Activated CD8-positive, alpha-beta memory T cell treated with anti-CD3 and anti-CD28 coated beads, Interleukin-2, amount 10 ng/mL, durations not matched to agents 7 days and 5 days (primary cell): ENCODE measurements at regions of chr7 and their contacts with region 1.

Region 1: GRCh38 chr7:142811154-142811737 is 40.5 kb downstream of the PRSS2 start:
- DNase-seq: no peak
- ATAC-seq: no peak
- H3K4me3 Mint-ChIP-seq: peak overlapping the region; percentile 25
- H3K27ac Mint-ChIP-seq: peak overlapping the region; percentile 84
- H3K4me1 Mint-ChIP-seq: peaks cover 68% of the 10 kb centered on the region
- H3K27me3 Mint-ChIP-seq: no peaks in the 10 kb centered on the region

Region 2: DNA sequence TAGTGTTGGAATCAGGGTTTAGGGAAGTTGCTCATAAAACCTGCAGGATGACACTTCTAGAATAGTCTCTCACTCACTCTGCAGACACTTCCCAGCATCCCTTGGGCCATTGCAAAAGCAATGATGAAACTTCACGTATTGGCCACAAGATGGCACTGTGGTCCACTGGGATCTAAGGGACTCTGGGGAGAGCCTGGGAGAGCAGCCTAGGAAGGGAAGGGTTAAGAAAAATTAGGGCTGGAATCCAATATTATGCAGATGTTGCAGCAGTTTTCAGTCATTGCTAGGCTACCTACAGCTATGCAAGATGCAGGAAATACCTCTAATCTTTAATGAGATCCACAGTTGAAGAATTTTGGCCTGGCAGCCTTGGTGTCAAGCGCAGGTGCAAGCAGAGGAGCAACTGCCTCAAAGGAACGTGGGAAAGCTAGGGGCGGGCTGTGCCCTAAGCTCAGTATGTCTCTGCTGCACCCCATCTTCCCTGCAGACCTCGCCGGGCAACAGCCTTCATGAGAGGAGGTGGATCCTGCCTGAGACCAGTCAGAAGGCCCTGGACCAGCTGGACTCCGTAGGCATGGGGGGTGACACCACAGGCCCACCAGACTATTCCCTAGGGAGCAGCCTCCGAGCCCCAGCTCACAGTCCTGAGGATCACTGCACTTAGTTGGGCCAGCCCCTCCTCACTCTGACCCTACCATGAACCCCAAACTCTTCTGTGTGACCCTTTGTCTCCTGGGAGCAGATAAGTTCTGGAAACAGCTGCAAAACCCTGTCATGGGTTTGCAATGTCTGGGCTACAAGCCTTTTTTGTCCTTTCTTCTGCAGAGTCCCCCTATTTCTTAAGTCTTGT is 425.5 kb before region 1 on chr7:
- CTCF ChIA-PET with region 1: interaction called, 31 read pairs
- DNase-seq: peak; percentile 72
- ATAC-seq: peak; percentile 62
- H3K4me3 Mint-ChIP-seq: peak overlapping the region; percentile 12
- H3K27ac Mint-ChIP-seq: peak overlapping the region; percentile 8
- H3K4me1 Mint-ChIP-seq: peaks cover 32% of the 10 kb centered on the region
- H3K27me3 Mint-ChIP-seq: no peaks in the 10 kb centered on the region

Region 3: GRCh38 chr7:142632291-142633134 is 178.7 kb before region 1 on chr7:
- CTCF ChIA-PET with region 1: interaction called, 24 read pairs
- DNase-seq: peak; percentile 62
- ATAC-seq: peak; percentile 86
- H3K4me3 Mint-ChIP-seq: no peak overlapping the region
- H3K27ac Mint-ChIP-seq: no peak overlapping the region
- H3K4me1 Mint-ChIP-seq: peaks cover 11% of the 10 kb centered on the region
- H3K27me3 Mint-ChIP-seq: no peaks in the 10 kb centered on the region

Region 4: GRCh38 chr7:142703655-142704305 is 107.5 kb before region 1 on chr7:
- CTCF ChIA-PET with region 1: no interaction called
- DNase-seq: no peak
- ATAC-seq: no peak
- H3K4me3 Mint-ChIP-seq: no peak overlapping the region
- H3K27ac Mint-ChIP-seq: no peak overlapping the region
- H3K4me1 Mint-ChIP-seq: peaks cover 19% of the 10 kb centered on the region
- H3K27me3 Mint-ChIP-seq: peaks cover 1% of the 10 kb centered on the region

Region 5: GRCh38 chr7:142772051-142772450 is 39.2 kb before region 1 on chr7:
- CTCF ChIA-PET with region 1: no interaction called
- DNase-seq: no peak
- ATAC-seq: no peak
- H3K4me3 Mint-ChIP-seq: no peak overlapping the region
- H3K27ac Mint-ChIP-seq: no peak overlapping the region
- H3K4me1 Mint-ChIP-seq: peaks cover 12% of the 10 kb centered on the region
- H3K27me3 Mint-ChIP-seq: no peaks in the 10 kb centered on the region

Region 6: DNA sequence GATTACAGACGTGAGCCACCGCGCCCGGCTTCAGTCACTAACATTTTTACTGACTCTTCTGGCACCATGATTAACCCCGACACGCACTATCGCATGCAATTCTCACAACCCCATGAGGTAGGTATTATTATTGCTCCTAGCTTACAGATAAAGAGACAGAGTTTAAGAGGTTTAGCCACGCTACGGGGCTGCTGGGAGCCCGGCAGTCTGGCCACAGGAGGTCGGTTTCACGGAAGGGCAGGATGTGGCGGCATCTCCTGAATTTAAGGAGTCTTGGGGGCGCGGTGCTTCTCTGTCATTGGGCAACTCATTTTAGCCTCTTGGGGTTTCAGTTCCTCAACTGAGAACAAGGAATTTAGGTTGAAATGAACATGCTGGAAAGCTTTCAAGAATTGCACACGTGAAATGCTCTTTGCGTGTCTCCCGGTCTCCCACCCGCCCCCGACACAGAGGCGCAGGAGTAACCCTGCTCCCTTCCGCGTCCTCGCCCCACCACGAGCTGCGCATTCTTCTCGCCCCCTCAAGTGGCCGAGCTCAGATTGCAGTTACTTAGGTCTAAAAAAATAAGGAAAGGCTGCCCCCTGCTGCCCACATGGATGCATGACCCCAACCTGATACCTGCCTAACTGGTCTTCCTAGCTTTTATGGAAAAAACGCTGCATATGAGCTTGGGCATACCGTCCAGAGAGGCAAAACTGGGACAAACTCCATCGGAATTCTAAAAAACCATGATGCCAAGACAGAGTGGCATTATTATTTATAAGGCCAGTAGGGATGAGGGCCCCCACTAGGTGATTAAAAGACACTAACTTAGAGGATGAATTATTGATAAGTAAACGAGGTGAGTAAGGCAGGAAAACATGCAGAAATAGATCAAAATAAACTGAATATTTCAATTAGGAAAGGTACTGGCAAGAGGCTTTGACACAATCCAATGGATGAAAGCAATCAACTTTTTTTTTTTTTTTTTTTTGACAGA is 28.0 kb before region 1 on chr7:
- CTCF ChIA-PET with region 1: interaction called, 103 read pairs
- DNase-seq: peak; percentile 86
- ATAC-seq: peak; percentile 59
- H3K4me3 Mint-ChIP-seq: peak overlapping the region; percentile 67
- H3K27ac Mint-ChIP-seq: peak overlapping the region; percentile 85
- H3K4me1 Mint-ChIP-seq: peaks cover 30% of the 10 kb centered on the region
- H3K27me3 Mint-ChIP-seq: no peaks in the 10 kb centered on the region

Region 7: DNA sequence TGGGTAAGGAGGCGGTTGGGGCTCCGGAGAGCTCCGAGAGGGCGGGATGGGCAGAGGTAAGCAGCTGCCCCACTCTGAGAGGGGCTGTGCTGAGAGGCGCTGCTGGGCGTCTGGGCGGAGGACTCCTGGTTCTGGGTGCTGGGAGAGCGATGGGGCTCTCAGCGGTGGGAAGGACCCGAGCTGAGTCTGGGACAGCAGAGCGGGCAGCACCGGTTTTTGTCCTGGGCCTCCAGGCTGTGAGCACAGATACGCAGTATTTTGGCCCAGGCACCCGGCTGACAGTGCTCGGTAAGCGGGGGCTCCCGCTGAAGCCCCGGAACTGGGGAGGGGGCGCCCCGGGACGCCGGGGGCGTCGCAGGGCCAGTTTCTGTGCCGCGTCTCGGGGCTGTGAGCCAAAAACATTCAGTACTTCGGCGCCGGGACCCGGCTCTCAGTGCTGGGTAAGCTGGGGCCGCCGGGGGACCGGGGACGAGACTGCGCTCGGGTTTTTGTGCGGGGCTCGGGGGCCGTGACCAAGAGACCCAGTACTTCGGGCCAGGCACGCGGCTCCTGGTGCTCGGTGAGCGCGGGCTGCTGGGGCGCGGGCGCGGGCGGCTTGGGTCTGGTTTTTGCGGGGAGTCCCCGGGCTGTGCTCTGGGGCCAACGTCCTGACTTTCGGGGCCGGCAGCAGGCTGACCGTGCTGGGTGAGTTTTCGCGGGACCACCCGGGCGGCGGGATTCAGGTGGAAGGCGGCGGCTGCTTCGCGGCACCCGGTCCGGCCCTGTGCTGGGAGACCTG is 14.4 kb before region 1 on chr7:
- CTCF ChIA-PET with region 1: interaction called, 127 read pairs
- DNase-seq: no peak
- ATAC-seq: peak; percentile 6
- H3K4me3 Mint-ChIP-seq: peak overlapping the region; percentile 100
- H3K27ac Mint-ChIP-seq: peak overlapping the region; percentile 92
- H3K4me1 Mint-ChIP-seq: peaks cover 70% of the 10 kb centered on the region
- H3K27me3 Mint-ChIP-seq: no peaks in the 10 kb centered on the region